ENCODE measurements at regions of chr20 and their contacts with region 1.

Region 1: DNA sequence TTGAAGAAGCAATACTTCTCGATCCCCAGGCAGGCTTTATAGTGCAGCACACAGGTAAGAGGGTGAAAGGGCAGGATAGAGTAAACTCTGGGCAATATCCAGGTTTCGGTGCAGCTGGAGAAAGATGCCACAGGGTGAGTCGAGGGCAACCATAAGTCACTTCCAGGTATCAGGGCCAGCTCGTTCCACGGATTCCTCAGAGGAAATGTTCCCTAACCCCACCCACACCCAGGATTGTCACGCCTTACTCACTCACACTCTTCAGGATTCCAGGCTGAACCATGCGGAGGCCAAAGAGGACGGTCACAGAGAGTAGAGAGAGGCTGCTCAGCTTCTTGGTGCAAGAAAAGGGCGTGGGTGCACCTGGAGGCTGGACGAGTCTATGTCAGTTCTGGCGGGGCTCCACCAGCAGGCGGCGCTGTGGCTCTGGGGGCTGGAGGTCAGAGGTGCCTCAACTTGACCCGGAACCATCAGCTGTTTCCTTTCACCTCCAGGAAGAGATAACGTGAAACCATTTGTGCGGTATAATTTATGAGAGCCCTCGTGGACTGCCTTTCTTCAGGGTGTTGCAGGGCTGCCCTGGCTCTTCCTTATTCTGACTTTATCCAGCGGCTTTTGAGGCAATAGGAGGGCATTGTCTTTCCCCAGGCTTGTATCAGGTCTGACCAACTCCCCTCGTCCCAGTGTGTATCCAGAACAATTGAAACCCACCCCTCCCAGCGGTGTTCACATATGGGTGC is 14.5 kb upstream of the WFDC12 start:
- DNase-seq: peak; percentile 85 to 89
- H3K4me3 ChIP-seq: no peak overlapping the region
- H3K4me3 Mint-ChIP-seq: no peak overlapping the region
- H3K27ac Mint-ChIP-seq: no peak overlapping the region
- H3K4me1 ChIP-seq: peaks cover 7% of the 10 kb centered on the region
- H3K4me1 Mint-ChIP-seq: no peaks in the 10 kb centered on the region
- H3K27me3 ChIP-seq: peaks cover 3% of the 10 kb centered on the region; the same call in 1 of the 2 replicates
- H3K27me3 Mint-ChIP-seq: peaks cover 11% of the 10 kb centered on the region
- CTCF ChIP-seq: peak; percentile 97 to 99

Region 2: DNA sequence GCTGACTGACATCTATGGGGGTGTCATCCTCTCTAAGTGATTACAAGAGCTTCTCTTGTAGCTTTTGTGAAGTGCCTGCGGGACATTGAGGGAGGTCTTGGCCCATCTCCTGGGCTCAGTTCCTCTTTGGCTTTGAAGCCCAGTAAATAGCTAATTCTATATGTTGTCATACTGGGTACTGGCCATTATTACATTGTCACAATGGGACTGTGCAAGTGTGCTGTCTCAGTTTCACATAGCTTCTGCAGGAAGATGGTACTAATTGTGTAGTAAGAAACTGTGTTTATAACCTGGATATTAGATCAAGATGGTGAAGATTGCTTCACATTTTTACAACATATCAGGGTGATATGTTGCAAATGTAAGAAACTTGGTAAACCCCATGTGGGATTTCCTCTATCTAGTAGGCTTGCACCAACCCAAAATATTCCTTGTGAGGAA is 356.8 kb after region 1 on chr20:
- CTCF ChIA-PET with region 1: interaction called, 10 read pairs
- POLR2A ChIA-PET with region 1: no interaction called
- intact Hi-C with region 1: no loop called
- DNase-seq: no peak
- H3K4me3 ChIP-seq: no peak overlapping the region
- H3K4me3 Mint-ChIP-seq: no peak overlapping the region
- H3K27ac Mint-ChIP-seq: no peak overlapping the region
- H3K4me1 ChIP-seq: no peaks in the 10 kb centered on the region
- H3K4me1 Mint-ChIP-seq: peaks cover 5% of the 10 kb centered on the region
- H3K27me3 ChIP-seq: no peaks in the 10 kb centered on the region; the same call in none of the 2 replicates
- H3K27me3 Mint-ChIP-seq: peaks cover 33% of the 10 kb centered on the region
- CTCF ChIP-seq: no peak

Region 3: DNA sequence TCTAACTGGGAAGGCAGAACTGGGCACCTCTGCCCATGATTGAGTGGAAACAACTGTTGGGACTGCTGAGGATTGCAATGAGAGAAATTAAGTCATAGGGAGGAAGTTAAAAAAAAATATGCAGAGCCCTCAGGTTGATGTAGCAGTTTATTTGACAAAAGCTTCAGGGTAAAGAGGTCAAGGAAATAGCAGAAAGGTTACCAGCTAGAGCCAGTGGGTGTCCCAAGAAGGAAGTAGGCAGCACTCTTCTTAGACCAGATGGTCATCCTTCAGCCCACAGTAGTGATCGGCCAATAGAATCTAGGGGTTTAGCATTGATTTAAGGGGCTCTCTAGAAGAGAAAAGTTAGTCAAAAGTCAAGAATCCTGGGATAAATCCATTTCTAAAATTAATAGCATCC is 469.1 kb after region 1 on chr20:
- CTCF ChIA-PET with region 1: no interaction called
- POLR2A ChIA-PET with region 1: no interaction called
- intact Hi-C with region 1: no loop called
- DNase-seq: no peak
- H3K4me3 ChIP-seq: no peak overlapping the region
- H3K4me3 Mint-ChIP-seq: no peak overlapping the region
- H3K27ac Mint-ChIP-seq: no peak overlapping the region
- H3K4me1 ChIP-seq: no peaks in the 10 kb centered on the region
- H3K4me1 Mint-ChIP-seq: no peaks in the 10 kb centered on the region
- H3K27me3 ChIP-seq: no peaks in the 10 kb centered on the region
- H3K27me3 Mint-ChIP-seq: peaks cover 6% of the 10 kb centered on the region
- CTCF ChIP-seq: no peak

Measured in Caco-2 (cell line).